ENCODE measurements at regions of chr9 and their contacts with region 1.

Region 1: DNA sequence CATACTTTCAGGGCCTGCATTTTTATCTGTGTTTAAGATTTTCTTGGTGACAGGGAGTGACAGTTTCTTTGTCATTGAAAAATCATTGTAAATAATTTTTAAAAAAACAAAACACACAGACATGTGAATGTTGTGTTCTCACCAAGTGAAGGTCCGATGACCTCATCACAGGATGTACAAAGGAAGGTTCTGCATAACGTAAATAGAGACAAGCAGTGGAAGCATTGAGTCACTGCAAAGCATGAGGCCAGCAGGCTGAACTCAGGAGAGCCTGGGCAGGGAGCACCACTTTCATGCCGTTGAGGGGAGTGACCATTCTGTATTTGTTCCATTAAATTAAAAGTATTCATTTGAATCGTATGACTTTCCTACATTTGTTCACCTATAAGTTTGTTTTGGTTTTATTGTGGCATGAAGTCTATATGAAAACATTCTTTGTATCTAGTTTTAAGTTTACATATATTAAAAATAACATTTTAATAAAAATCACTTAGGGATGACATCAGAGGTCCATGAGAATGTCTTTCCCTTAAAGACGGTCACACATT is 70.4 kb upstream of the TLE1 start:
- DNase-seq: peak; percentile 88
- ATAC-seq: peak; percentile 100
- H3K4me3 ChIP-seq: no peak overlapping the region
- H3K27ac ChIP-seq: peak overlapping the region; percentile 72
- H3K4me1 ChIP-seq: peaks cover 6% of the 10 kb centered on the region
- H3K27me3 ChIP-seq: no peaks in the 10 kb centered on the region
- CTCF ChIP-seq: no peak

Region 2: DNA sequence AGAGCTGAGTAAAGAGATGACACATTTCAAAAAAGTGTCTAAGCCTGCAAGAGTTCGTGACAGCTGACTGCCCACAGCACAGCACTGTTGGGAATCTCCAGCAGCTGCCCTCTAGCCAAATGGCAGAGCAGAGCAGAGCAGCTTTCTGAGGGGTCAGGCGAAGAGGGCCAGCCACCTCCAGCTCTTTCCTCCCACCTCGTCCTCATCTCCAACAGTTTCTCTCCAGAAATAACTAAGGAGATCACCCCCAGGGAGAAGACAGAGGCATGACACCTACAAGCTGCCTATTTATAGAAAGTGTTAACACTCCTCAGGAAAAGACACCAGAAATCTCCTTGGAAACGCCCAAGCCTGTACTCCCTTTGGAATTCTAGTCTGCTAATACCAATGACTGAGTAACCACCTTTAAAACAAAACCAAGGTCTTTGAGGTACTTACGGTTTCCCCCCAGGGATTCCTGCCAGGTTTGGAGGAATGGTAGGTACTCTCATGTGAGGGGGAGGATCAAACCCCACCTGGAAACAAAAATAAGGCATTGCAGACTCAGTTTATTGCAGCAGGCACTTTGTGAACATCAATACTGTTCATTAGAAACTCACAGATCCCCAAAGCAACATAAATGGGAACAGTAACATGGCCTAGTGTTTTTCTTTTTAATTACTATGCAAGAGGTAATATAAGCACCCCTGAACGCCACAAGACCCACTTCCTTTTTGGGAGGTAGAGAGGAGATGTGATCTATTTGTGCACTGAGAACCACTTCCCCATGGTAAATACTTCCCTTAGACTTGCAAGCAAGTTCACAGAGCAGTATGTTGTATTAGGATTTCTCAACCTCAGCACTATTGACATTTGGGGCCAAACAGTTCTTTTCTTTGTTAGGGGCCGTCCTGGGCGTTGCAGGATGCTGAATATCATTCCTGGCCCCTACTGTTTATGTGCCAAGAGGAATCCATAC is 149.7 kb before region 1 on chr9:
- CTCF ChIA-PET with region 1: no interaction called
- POLR2A ChIA-PET with region 1: no interaction called
- intact Hi-C with region 1: no loop called
- DNase-seq: no peak
- ATAC-seq: no peak
- H3K4me3 ChIP-seq: no peak overlapping the region
- H3K27ac ChIP-seq: no peak overlapping the region
- H3K4me1 ChIP-seq: peaks cover 3% of the 10 kb centered on the region
- H3K27me3 ChIP-seq: no peaks in the 10 kb centered on the region
- CTCF ChIP-seq: no peak

Region 3: GRCh38 chr9:81737853-81738507 is 21.8 kb before region 1 on chr9:
- CTCF ChIA-PET with region 1: no interaction called
- POLR2A ChIA-PET with region 1: no interaction called
- intact Hi-C with region 1: loop called (anchors 1 kb)
- DNase-seq: peak; percentile 89
- ATAC-seq: peak; percentile 95
- H3K4me3 ChIP-seq: no peak overlapping the region
- H3K27ac ChIP-seq: peak overlapping the region; percentile 93
- H3K4me1 ChIP-seq: peaks cover 29% of the 10 kb centered on the region
- H3K27me3 ChIP-seq: no peaks in the 10 kb centered on the region
- CTCF ChIP-seq: no peak